ENCODE measurements at regions of chr20 and their contacts with region 1.

Region 1: DNA sequence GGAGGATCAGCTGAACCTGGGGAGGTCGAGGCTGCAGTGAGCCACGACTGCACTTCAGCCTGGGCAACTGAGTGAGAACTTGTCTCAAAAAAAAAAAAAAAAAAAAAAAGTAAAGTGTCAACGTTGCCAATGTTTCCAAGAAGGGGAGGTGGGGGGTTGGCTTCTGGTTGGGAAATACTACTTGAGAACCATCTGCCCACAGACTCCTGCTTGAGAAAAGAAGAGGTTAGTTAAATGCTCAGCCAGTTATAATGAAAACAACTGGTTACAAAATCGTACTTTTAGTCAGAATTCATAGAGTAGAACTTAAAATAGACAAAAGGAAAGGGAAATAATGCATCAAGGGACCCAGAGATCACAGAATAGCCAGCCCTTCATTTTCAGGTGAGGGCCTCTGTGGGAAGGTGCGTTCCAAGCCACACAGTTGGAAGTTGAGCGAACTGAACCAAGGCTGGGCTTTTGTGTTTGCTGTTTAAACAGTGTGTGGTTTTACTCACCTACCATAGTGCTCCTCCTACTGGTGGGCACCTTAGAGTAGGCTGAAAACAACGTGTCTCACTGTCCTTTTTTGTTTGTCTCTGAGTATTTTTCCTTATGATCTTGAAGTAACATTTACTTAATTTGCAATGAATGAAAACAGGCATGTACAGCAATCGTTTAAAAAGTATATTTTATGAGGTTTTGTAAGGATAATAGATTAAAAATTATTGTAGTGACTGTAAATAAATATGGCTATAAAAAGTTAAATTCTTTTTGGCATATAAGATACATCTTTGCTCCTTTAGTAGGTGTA is 200.7 kb downstream of the BCAS1 start:
- DNase-seq: peak; percentile 94
- H3K4me3 ChIP-seq: no peak overlapping the region
- H3K4me3 Mint-ChIP-seq: peak overlapping the region; percentile 29
- H3K27ac Mint-ChIP-seq: peak overlapping the region; percentile 45
- H3K4me1 ChIP-seq: peaks cover 59% of the 10 kb centered on the region
- H3K4me1 Mint-ChIP-seq: peaks cover 63% of the 10 kb centered on the region
- H3K27me3 ChIP-seq: no peaks in the 10 kb centered on the region
- H3K27me3 Mint-ChIP-seq: no peaks in the 10 kb centered on the region
- CTCF ChIP-seq: peak; percentile 99 to 100

Region 2: GRCh38 chr20:53623454-53624211 is 246.0 kb before region 1 on chr20:
- CTCF ChIA-PET with region 1: no interaction called
- POLR2A ChIA-PET with region 1: no interaction called
- intact Hi-C with region 1: loop called (anchors 1 kb)
- DNase-seq: peak; percentile 86 to 89
- H3K4me3 ChIP-seq: peak overlapping the region; percentile 41
- H3K4me3 Mint-ChIP-seq: peak overlapping the region; percentile 83
- H3K27ac Mint-ChIP-seq: peak overlapping the region; percentile 97
- H3K4me1 ChIP-seq: peaks cover 33% of the 10 kb centered on the region
- H3K4me1 Mint-ChIP-seq: peaks cover 24% of the 10 kb centered on the region
- H3K27me3 ChIP-seq: no peaks in the 10 kb centered on the region
- H3K27me3 Mint-ChIP-seq: no peaks in the 10 kb centered on the region
- CTCF ChIP-seq: peak in 1 of 2 experiments; percentile 35

Region 3: DNA sequence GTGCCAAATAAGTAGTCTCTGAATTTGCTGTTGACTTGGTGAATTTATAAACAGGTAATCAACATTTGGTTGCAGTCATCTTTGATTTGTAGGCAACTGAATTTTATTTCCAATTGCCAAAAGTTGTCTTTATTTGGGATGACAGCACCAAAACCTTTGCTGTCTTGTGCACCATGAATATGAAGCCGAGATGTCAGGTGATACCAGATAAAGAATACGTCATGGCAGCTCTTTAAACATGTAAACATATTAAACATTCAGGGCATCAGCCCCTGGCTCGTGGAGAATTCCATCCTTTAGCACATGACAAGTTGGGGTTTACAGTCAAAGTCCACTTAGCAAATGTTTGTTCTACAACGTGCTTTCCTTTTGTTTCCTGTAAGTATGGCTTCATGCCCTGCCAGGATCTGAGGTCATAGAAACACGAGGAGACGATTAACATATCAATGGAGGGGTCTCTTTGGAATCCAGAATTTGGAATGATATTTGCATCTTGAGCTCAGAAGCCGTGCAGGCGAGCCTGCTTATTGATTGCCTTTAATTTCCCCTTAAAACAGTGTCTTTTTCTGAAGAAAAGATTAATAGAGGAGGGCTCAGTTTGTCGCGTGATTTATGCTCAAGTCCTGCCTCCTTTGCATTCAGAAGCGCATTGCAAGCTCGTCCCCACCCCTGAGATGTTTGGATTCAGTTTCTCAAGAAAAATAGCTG is 105.8 kb before region 1 on chr20:
- CTCF ChIA-PET with region 1: interaction called, 3 read pairs
- POLR2A ChIA-PET with region 1: interaction called, 9 read pairs
- intact Hi-C with region 1: loop called (anchors 1 kb)
- DNase-seq: peak; percentile 95 to 97
- H3K4me3 ChIP-seq: peak overlapping the region; percentile 26
- H3K4me3 Mint-ChIP-seq: peak overlapping the region; percentile 82
- H3K27ac Mint-ChIP-seq: peak overlapping the region; percentile 99
- H3K4me1 ChIP-seq: peaks cover 61% of the 10 kb centered on the region
- H3K4me1 Mint-ChIP-seq: peaks cover 55% of the 10 kb centered on the region
- H3K27me3 ChIP-seq: no peaks in the 10 kb centered on the region
- H3K27me3 Mint-ChIP-seq: no peaks in the 10 kb centered on the region
- CTCF ChIP-seq: peak; percentile 33 to 35

Region 4: GRCh38 chr20:53786445-53787267 is 83.0 kb before region 1 on chr20:
- CTCF ChIA-PET with region 1: interaction called, 17 read pairs
- POLR2A ChIA-PET with region 1: interaction called, 4 read pairs
- intact Hi-C with region 1: loop called (anchors 1 kb)
- DNase-seq: peak; percentile 47 to 67
- H3K4me3 ChIP-seq: no peak overlapping the region; the same call in 1 of the 2 replicates
- H3K4me3 Mint-ChIP-seq: peak overlapping the region; percentile 39
- H3K27ac Mint-ChIP-seq: peak overlapping the region; percentile 59
- H3K4me1 ChIP-seq: peaks cover 71% of the 10 kb centered on the region
- H3K4me1 Mint-ChIP-seq: peaks cover 70% of the 10 kb centered on the region
- H3K27me3 ChIP-seq: no peaks in the 10 kb centered on the region
- H3K27me3 Mint-ChIP-seq: no peaks in the 10 kb centered on the region
- CTCF ChIP-seq: peak in 1 of 2 experiments; percentile 13

Region 5: GRCh38 chr20:53828682-53829254 is 40.9 kb before region 1 on chr20:
- CTCF ChIA-PET with region 1: no interaction called
- POLR2A ChIA-PET with region 1: no interaction called
- intact Hi-C with region 1: loop called (anchors 2 kb)
- DNase-seq: peak in 1 of 2 experiments; percentile 47
- H3K4me3 ChIP-seq: 0 out of 2 replicates have a peak overlapping the region, but pooled peaks have one; percentile 8
- H3K4me3 Mint-ChIP-seq: peak overlapping the region; percentile 65
- H3K27ac Mint-ChIP-seq: peak overlapping the region; percentile 81
- H3K4me1 ChIP-seq: peaks cover 35% of the 10 kb centered on the region
- H3K4me1 Mint-ChIP-seq: peaks cover 45% of the 10 kb centered on the region
- H3K27me3 ChIP-seq: no peaks in the 10 kb centered on the region
- H3K27me3 Mint-ChIP-seq: no peaks in the 10 kb centered on the region
- CTCF ChIP-seq: peak in 1 of 2 experiments; percentile 41

Region 6: DNA sequence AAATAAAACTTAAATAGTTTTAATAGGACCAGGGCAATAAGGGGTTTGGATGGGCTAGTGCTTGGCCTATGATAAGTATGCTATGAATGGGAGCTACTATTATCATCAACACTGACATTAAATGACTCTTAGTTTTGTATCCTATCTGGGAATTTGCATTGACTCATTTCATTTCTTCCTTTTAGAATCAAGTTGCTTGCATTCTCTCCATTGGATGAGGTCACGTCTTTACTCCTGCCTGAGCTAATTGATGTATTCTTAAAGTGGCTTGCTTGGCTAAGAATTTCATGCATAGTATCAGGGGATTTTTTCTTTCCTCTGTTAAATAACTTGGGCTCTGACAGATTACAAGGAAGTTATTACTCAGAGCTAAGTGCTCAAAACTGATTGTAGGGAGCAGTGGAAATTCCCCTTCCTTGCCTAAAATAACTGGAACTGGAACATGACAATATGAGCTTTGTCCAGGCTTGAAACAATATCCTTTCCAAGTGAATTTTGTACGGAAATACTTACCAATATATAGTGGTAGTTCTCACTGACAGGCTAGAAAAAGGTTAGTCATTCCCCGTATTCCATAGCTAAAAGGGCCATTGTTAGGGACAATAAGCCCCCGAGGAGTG is 30.8 kb after region 1 on chr20:
- CTCF ChIA-PET with region 1: no interaction called
- POLR2A ChIA-PET with region 1: no interaction called
- intact Hi-C with region 1: no loop called
- DNase-seq: no peak
- H3K4me3 ChIP-seq: no peak overlapping the region
- H3K4me3 Mint-ChIP-seq: no peak overlapping the region
- H3K27ac Mint-ChIP-seq: no peak overlapping the region
- H3K4me1 ChIP-seq: peaks cover 19% of the 10 kb centered on the region
- H3K4me1 Mint-ChIP-seq: peaks cover 15% of the 10 kb centered on the region
- H3K27me3 ChIP-seq: no peaks in the 10 kb centered on the region
- H3K27me3 Mint-ChIP-seq: no peaks in the 10 kb centered on the region
- CTCF ChIP-seq: no peak

Region 7: GRCh38 chr20:53939572-53940359 is 70.1 kb after region 1 on chr20:
- CTCF ChIA-PET with region 1: interaction called, 8 read pairs
- POLR2A ChIA-PET with region 1: no interaction called
- intact Hi-C with region 1: loop called (anchors 1 kb)
- DNase-seq: peak; percentile 95 to 96
- H3K4me3 ChIP-seq: no peak overlapping the region
- H3K4me3 Mint-ChIP-seq: no peak overlapping the region
- H3K27ac Mint-ChIP-seq: no peak overlapping the region
- H3K4me1 ChIP-seq: peaks cover 30% of the 10 kb centered on the region
- H3K4me1 Mint-ChIP-seq: peaks cover 35% of the 10 kb centered on the region
- H3K27me3 ChIP-seq: no peaks in the 10 kb centered on the region; the same call in 1 of the 2 replicates
- H3K27me3 Mint-ChIP-seq: no peaks in the 10 kb centered on the region
- CTCF ChIP-seq: peak; percentile 93 to 98

Region 8: DNA sequence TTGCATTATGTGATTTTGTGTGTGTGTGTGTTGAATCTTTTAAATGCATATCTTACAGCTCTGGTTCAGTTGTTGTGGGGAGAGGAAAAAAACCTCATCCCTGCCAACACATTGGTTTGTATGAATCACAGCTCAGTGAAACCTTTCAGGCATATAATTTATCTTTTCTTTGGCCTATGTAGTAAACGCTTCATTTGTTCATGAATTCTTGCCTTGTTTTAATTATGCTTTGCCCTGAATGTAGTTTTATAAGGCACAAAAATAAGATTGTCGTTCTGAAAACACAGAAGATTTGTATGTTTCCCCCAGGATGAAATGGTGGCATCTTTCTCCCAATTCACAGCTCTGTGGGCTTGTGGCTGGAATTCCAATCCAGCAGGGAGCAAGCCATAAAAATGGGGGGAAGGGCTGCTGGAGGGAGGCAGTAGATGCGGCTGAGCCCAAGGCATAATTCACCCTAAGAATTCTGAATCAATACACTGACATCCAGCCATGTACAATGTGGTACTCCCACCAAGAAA is 155.6 kb after region 1 on chr20:
- CTCF ChIA-PET with region 1: no interaction called
- POLR2A ChIA-PET with region 1: no interaction called
- intact Hi-C with region 1: no loop called
- DNase-seq: no peak
- H3K4me3 ChIP-seq: no peak overlapping the region
- H3K4me3 Mint-ChIP-seq: no peak overlapping the region
- H3K27ac Mint-ChIP-seq: no peak overlapping the region
- H3K4me1 ChIP-seq: no peaks in the 10 kb centered on the region
- H3K4me1 Mint-ChIP-seq: no peaks in the 10 kb centered on the region
- H3K27me3 ChIP-seq: peaks cover 1% of the 10 kb centered on the region; the same call in 1 of the 2 replicates
- H3K27me3 Mint-ChIP-seq: peaks cover 14% of the 10 kb centered on the region
- CTCF ChIP-seq: no peak